Gastrocnemius medialis (tissue), 4 donors: ENCODE measurements at regions of chr10 and their contacts with region 1.

Region 1: GRCh38 chr10:52652431-52653262 is 119.9 kb downstream of the MBL2 start:
- DNase-seq: no peak
- ATAC-seq: no peak
- H3K4me3 ChIP-seq: no peak overlapping the region
- H3K27ac ChIP-seq: peak overlapping the region in 2 of 4 donors; percentile 21 to 80
- H3K4me1 ChIP-seq: peaks cover 0 to 30% of the 10 kb centered on the region in 2 donors
- H3K27me3 ChIP-seq: no peaks in the 10 kb centered on the region
- CTCF ChIP-seq: no peak
- POLR2A ChIP-seq: no peak

Region 2: DNA sequence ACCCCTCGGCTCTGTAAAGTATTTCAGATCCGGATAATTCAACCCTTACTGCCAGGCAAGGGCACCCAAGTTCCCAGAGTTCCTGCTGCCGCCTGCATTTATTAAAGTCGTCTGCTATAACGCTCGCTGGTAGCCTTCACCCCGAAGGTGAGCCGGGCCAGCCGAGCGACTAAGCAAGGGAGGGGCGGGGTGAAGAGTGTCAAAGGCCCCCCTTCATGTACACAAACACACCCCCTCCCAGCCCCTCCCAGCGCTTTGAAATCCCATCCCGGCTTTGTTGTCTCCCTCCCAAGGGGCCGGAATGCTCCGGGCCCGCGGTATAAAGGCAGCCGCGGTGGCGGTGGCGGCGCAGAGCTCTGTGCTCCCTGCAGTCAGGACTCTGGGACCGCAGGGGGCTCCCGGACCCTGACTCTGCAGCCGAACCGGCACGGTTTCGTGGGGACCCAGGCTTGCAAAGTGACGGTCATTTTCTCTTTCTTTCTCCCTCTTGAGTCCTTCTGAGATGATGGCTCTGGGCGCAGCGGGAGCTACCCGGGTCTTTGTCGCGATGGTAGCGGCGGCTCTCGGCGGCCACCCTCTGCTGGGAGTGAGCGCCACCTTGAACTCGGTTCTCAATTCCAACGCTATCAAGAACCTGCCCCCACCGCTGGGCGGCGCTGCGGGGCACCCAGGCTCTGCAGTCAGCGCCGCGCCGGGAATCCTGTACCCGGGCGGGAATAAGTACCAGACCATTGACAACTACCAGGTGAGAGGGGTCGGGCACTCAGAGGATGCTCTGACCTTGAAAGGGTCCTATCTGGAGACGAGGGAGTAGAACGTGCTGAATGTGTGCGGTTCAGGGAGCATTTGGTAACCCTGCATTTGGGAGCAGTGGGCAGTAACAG is 338.5 kb before region 1 on chr10 and contains the start of gene DKK1:
- in situ Hi-C with region 1: no loop called
- intact Hi-C with region 1: loop called (anchors 10 kb)
- DNase-seq: peak; percentile 17 to 46
- ATAC-seq: peak; percentile 79 to 85
- H3K4me3 ChIP-seq: peak within 1 kb of the TSS; percentile 61 to 75 (median 68)
- H3K27ac ChIP-seq: no peak within 1 kb of the TSS
- H3K4me1 ChIP-seq: peaks cover 8 to 21% of the 10 kb centered on the region in 2 donors
- H3K27me3 ChIP-seq: peaks cover 0 to 7% (median 0%) of the 10 kb centered on the region in 3 donors
- CTCF ChIP-seq: peak; percentile 49 to 82 (median 70)
- POLR2A ChIP-seq: no peak
- total RNA-seq, gene DKK1: 0.78 TPM in 1 of 4 donors, not detected in the others

Region 3: GRCh38 chr10:52517012-52517411 is 135.6 kb before region 1 on chr10:
- in situ Hi-C with region 1: no loop called
- intact Hi-C with region 1: no loop called
- DNase-seq: no peak
- ATAC-seq: no peak
- H3K4me3 ChIP-seq: no peak overlapping the region
- H3K27ac ChIP-seq: no peak overlapping the region
- H3K4me1 ChIP-seq: no peaks in the 10 kb centered on the region
- H3K27me3 ChIP-seq: no peaks in the 10 kb centered on the region
- CTCF ChIP-seq: no peak
- POLR2A ChIP-seq: no peak